ENCODE measurements at regions of chr2 and their contacts with region 1.

Region 1: DNA sequence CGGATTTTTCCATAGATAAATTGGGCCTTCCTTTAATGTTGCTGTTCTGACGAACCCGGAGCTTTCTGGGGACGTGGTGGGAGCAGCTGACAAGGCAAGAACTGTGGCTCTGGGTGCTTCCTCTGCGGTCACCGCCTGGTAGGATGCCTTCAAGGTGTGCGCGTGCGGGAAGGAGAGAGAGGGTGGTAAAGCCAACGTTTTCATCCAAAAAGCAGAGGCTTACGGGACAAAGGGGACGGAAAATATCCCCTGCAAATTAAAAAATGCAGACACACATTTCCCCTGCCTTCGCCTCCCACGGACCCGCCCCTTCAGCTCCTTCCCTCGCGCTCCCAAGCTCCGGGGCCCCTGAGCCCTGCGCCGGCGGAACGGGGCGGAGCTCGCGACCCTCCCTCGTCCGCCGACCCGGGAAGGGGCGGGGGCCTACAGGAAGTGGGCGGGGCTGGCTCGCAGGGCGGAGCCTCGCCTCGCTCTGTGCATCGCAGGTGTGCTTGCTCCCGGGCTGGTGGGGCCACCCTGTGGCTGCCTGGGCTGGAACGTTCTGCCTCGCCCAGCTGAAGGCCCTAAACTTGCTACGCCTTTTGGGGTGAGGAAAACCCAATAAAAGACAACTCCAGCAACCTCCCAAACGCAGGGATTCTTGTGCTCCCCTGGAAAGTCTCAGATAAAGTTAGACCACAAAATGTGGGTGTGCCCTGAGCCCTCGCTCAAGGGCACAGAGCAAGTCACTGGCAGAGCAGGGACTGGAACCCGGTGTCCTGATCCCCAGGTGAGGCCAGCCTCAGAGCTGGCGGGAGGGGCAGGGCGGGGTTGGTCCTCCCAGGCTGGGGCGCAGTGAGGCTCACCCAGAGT is 25.4 kb upstream of the SLC66A3 start:
- DNase-seq: peak; percentile 67

Region 2: GRCh38 chr2:10832203-10832936 is 297.5 kb before region 1 on chr2:
- in situ Hi-C with region 1: loop called (anchors 10 kb)
- DNase-seq: peak; percentile 72

Region 3: GRCh38 chr2:10889651-10890215 is 240.1 kb before region 1 on chr2:
- in situ Hi-C with region 1: no loop called
- DNase-seq: no peak

Region 4: DNA sequence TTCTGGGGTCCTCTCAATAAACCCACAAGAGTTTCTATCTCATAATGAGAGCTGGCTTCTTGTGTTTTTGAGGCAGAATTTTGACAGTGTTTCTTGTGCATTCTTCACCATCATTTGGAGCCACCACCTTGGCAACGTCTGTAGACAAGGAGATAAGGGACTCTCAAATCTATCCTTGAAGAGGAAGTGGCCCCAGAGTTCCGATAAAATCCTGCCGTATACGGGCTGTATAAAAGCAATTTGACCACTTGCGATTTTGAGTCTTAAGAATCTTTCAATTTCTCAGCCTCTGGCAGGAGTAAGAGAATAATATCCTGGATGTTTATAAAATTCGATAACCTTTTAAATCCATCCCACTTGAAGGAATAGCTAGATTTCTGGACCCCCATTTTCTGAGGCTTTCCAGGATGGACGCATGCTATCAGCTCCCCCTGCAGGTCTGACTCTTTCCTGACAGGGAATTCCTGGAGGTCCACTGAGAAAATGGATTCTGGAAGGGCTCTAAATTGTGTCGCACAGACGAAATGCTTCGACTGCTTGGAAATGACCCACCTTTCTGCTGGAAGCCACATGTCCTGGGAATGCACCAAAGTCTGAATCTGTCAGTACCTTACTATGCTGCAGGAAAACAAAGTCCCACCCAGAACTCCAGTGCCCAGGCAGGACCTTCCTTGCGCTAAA is 282.1 kb after region 1 on chr2:
- in situ Hi-C with region 1: loop called (anchors 10 kb)
- DNase-seq: no peak

Measured in Caki2 (cell line).